ENCODE measurements at regions of chr2 and their contacts with region 1.

Region 1: DNA sequence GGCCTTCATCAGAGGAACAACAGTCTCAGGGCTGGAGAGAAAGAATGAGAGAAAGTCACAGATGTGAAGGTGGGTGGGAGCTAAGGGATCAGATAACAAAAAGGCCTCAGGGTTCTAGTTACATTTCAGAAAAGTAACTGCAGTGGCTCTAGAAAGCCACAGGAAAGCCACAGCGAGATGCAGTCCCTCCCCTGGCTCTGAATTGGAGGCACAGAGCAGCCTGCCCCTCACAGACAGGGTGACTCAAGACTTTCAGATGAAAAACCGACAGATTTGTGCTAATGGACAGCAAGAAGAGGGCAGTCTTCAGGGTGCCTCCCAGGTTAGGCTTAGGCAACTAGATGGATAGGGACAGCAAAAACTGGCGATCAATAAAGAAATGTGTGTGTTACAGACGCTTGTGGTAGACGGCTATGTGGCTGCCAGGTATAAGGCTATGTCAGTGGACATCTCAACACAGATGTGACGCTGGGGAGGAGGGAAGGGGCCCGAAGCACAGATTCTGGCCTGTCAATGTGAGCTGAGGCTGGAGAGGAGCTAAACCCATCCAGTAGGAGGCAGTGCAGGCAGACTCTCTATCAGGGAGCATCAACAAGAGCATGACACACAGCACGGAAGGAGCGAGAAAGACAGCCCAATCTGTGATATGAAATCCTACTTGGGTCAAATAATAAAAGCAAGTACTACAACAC is 26.2 kb downstream of the UNC50 start:
- DNase-seq: peak; percentile 57 to 81
- ATAC-seq: peak; percentile 51 to 70 (median 65)
- H3K4me3 ChIP-seq: no peak overlapping the region
- H3K4me3 Mint-ChIP-seq: peak overlapping the region; percentile 57
- H3K27ac ChIP-seq: peak overlapping the region; percentile 87
- H3K27ac Mint-ChIP-seq: peak overlapping the region; percentile 79 to 96
- H3K4me1 ChIP-seq: peaks cover 44% of the 10 kb centered on the region
- H3K4me1 Mint-ChIP-seq: peaks cover 58 to 65% of the 10 kb centered on the region in 2 donors
- H3K27me3 ChIP-seq: no peaks in the 10 kb centered on the region
- H3K27me3 Mint-ChIP-seq: no peaks in the 10 kb centered on the region
- CTCF ChIP-seq: peak; percentile 55

Region 2: DNA sequence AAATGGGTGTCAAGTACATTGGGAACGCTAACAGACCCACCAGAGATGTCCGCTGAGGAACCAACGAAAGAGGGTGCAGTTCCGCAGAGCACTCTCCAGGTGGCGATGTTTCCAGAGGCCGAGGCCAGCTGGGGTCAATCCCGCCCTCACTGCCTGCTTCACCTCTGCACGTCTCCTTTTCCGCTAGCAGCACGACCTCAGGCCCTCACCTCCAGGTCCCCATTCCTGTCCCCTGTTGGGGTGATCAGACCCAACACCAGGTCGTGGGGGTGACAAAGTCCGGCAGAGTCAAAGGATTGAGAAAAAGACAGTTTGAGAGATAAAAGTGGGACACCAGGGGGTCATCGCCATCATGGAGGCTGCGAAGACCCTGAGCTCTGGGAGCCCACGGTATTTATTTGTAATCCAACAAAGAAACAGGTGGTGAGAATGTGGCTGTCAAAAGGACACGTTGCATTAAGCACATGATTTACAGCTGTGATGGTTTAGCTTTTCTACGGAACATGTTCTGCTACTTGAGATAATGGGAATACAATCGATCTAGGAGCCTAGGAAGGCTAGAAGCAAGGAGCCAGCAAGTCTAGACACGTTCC is 893.9 kb before region 1 on chr2:
- intact Hi-C with region 1: loop called (anchors 10 kb)
- DNase-seq: peak; percentile 50 to 71
- ATAC-seq: peak; percentile 49 to 63 (median 55)
- H3K4me3 ChIP-seq: no peak overlapping the region
- H3K4me3 Mint-ChIP-seq: peak overlapping the region; percentile 65
- H3K27ac ChIP-seq: peak overlapping the region; percentile 86
- H3K27ac Mint-ChIP-seq: peak overlapping the region; percentile 80 to 94
- H3K4me1 ChIP-seq: peaks cover 77% of the 10 kb centered on the region
- H3K4me1 Mint-ChIP-seq: peaks cover 74 to 82% of the 10 kb centered on the region in 2 donors
- H3K27me3 ChIP-seq: no peaks in the 10 kb centered on the region
- H3K27me3 Mint-ChIP-seq: no peaks in the 10 kb centered on the region
- CTCF ChIP-seq: peak; percentile 83

Region 3: GRCh38 chr2:98608116-98608999 is 26.2 kb before region 1 on chr2 and contains the starts of genes COA5 and UNC50:
- intact Hi-C with region 1: loop called (anchors 1 kb)
- DNase-seq: peak; percentile 91 to 94
- ATAC-seq: peak; percentile 89 to 95 (median 93)
- H3K4me3 ChIP-seq: peak within 1 kb of the TSS; percentile 98
- H3K4me3 Mint-ChIP-seq: peak within 1 kb of the TSS; percentile 97
- H3K27ac ChIP-seq: peak within 1 kb of the TSS; percentile 96
- H3K27ac Mint-ChIP-seq: peak within 1 kb of the TSS; percentile 88 to 97
- H3K4me1 ChIP-seq: peaks cover 32% of the 10 kb centered on the region
- H3K4me1 Mint-ChIP-seq: peaks cover 67 to 72% of the 10 kb centered on the region in 2 donors
- H3K27me3 ChIP-seq: no peaks in the 10 kb centered on the region
- H3K27me3 Mint-ChIP-seq: no peaks in the 10 kb centered on the region
- CTCF ChIP-seq: no peak
- total RNA-seq, gene COA5: 27.4 to 39.6 (median 36.1) TPM
- total RNA-seq, gene UNC50: 30.8 to 40.5 (median 32.1) TPM

Region 4: DNA sequence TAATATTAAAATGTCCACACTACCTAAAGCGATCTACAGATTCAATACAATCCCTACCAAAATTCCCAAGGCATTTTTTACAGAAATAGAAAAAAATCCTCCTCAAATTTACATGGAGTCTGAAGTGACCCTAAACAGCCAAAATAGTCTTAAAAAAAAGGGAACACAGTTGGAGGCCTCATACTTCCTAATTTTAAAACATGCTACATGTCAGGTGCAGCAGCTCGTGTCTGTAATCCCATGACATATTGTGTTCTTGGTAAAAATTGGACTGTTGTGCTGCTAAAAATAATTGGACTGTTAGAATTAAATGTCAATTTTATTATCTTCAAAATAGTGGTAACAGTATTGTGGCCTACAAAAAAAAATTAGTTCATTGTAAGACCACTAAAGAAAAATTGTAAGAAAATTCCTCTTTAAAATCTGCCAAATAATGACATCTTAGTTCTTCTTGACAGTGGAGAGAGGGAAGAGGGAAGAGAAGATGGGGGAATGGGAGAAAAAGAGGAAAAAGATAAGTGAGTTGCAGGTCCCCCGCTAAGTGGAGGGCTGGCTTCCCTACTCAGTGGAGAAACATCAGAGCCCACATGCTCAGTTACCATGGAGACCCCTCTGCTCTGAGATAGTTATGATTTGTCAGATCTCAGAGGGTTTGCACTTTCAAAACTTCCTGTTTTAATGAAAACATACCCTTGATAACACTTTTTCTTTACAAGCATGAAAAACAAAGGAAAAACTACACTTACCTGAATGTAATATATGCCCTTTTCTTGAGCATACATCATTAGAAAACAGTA is 20.4 kb after region 1 on chr2:
- intact Hi-C with region 1: loop called (anchors 2 kb)
- DNase-seq: peak in 1 of 2 donors; percentile 83
- ATAC-seq: peak; percentile 36 to 65 (median 38)
- H3K4me3 ChIP-seq: no peak overlapping the region
- H3K4me3 Mint-ChIP-seq: peak overlapping the region; percentile 83
- H3K27ac ChIP-seq: peak overlapping the region; percentile 83
- H3K27ac Mint-ChIP-seq: peak overlapping the region; percentile 83 to 90
- H3K4me1 ChIP-seq: peaks cover 31% of the 10 kb centered on the region
- H3K4me1 Mint-ChIP-seq: peaks cover 78 to 85% of the 10 kb centered on the region in 2 donors
- H3K27me3 ChIP-seq: no peaks in the 10 kb centered on the region
- H3K27me3 Mint-ChIP-seq: no peaks in the 10 kb centered on the region
- CTCF ChIP-seq: no peak

Region 5: GRCh38 chr2:98835831-98836385 is 201.4 kb after region 1 on chr2:
- intact Hi-C with region 1: loop called (anchors 5 kb)
- DNase-seq: peak in 1 of 2 donors; percentile 85
- ATAC-seq: peak; percentile 17 to 63 (median 60)
- H3K4me3 ChIP-seq: no peak overlapping the region
- H3K4me3 Mint-ChIP-seq: no peak overlapping the region
- H3K27ac ChIP-seq: no peak overlapping the region
- H3K27ac Mint-ChIP-seq: peak overlapping the region in 1 of 2 donors; percentile 29
- H3K4me1 ChIP-seq: peaks cover 39% of the 10 kb centered on the region
- H3K4me1 Mint-ChIP-seq: peaks cover 29 to 42% of the 10 kb centered on the region in 2 donors
- H3K27me3 ChIP-seq: no peaks in the 10 kb centered on the region
- H3K27me3 Mint-ChIP-seq: peaks cover 4 to 12% of the 10 kb centered on the region in 2 donors
- CTCF ChIP-seq: no peak

Region 6: DNA sequence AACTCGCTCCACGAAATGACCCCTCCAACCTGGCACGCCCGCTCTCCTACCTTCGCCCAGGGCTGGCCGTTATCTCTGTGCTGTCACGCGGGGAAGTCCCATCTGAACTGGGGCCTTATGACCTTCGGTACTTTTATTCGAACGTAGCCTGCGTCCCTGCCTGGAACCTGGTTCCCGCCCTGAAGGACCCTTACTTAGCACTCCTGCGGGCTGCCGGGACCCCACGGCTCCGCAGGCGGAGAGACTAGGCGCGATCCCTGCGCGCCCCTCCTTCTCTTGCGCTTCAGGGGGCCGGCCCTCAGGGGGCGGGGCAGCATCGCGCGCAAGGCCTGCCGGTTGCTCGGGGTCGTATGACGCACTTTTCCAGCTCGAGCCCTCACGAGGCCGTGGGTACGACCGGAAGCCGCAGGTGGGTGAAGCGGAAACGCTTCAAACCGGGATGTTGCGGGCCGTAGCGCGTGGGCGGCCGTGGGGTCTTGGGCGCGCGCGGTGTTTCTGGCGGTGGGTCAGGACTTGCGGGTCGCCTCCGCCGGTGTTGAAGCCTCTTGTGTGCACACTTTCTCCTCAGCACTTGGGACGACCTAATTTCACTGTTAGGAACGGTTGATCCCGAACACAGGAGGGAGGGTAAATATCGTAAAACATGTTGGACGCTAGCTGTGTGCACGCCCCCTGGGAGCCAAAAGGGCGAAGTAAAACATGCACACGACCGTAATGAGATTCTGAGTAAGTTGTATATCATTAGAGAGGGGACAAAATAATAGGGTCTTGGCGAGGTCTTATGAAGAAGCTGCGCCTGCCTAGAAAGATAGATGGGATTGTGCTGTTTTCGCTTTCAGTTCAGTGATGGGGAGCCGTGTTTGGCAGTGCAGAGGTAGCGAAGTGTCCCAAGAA is 520.3 kb after region 1 on chr2 and contains the starts of genes LIPT1 and TSGA10:
- intact Hi-C with region 1: loop called (anchors 5 kb)
- DNase-seq: peak; percentile 90 to 97
- ATAC-seq: peak; percentile 89 to 97 (median 93)
- H3K4me3 ChIP-seq: peak within 1 kb of the TSS; percentile 85
- H3K4me3 Mint-ChIP-seq: no peak within 1 kb of the TSS
- H3K27ac ChIP-seq: peak within 1 kb of the TSS; percentile 92
- H3K27ac Mint-ChIP-seq: no peak within 1 kb of the TSS
- H3K4me1 ChIP-seq: peaks cover 15% of the 10 kb centered on the region
- H3K4me1 Mint-ChIP-seq: peaks cover 0 to 48% of the 10 kb centered on the region in 2 donors
- H3K27me3 ChIP-seq: no peaks in the 10 kb centered on the region
- H3K27me3 Mint-ChIP-seq: no peaks in the 10 kb centered on the region
- CTCF ChIP-seq: no peak
- total RNA-seq, gene LIPT1: 12.0 to 21.4 (median 17.3) TPM
- total RNA-seq, gene TSGA10: 8.4 to 16.0 (median 11.5) TPM